Calu3 (cell line): ENCODE measurements at regions of chr16 and their contacts with region 1.

Region 1: DNA sequence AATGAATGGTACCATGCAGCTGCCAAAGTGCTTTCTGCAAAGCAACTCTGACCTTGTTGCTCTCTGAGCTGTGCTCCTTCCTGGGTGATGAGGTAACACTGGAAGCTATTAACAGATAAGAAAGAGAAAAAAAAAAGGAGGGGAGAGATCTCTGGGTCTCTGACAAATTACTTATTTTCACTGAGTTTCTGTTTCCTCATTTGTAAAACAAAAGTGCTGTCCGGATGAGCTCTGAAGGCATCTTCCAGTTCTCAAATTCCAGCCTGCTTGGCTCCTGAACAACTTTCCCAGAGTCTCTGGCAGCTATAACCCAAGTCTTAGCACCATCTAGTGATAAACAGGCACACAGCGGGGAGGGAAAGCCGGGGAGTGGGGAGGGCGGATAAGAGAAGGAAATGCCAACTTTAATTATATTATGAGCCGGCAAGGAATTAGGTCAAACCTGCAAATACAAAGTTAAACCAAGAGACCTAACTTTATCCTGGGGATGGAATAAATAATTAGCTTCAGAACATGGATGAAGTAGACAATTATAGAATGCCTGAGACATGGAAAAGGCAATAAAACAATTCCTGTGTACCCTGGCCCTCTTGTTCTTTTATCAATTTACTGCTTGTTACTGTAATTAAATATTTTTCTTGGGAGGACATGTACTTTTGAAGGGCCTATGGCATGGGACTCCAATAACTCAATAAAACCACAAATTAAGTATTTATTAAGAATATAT is 61.3 kb upstream of the KIFC3 start:
- DNase-seq: peak; percentile 75
- H3K4me3 Mint-ChIP-seq: no peak overlapping the region
- H3K27ac Mint-ChIP-seq: no peak overlapping the region
- H3K4me1 Mint-ChIP-seq: peaks cover 14% of the 10 kb centered on the region
- H3K27me3 Mint-ChIP-seq: no peaks in the 10 kb centered on the region
- CTCF ChIP-seq: peak; percentile 40

Region 2: GRCh38 chr16:57757326-57757786 is 106.2 kb before region 1 on chr16:
- CTCF ChIA-PET with region 1: interaction called, 14 read pairs
- intact Hi-C with region 1: loop called (anchors 1 kb)
- DNase-seq: peak; percentile 98
- H3K4me3 Mint-ChIP-seq: no peak overlapping the region
- H3K27ac Mint-ChIP-seq: no peak overlapping the region
- H3K4me1 Mint-ChIP-seq: no peaks in the 10 kb centered on the region
- H3K27me3 Mint-ChIP-seq: no peaks in the 10 kb centered on the region
- CTCF ChIP-seq: peak; percentile 95

Region 3: GRCh38 chr16:57795431-57795878 is 68.1 kb before region 1 on chr16:
- CTCF ChIA-PET with region 1: interaction called, 38 read pairs
- intact Hi-C with region 1: loop called (anchors 2 kb)
- DNase-seq: peak; percentile 76
- H3K4me3 Mint-ChIP-seq: no peak overlapping the region
- H3K27ac Mint-ChIP-seq: no peak overlapping the region
- H3K4me1 Mint-ChIP-seq: peaks cover 37% of the 10 kb centered on the region
- H3K27me3 Mint-ChIP-seq: no peaks in the 10 kb centered on the region
- CTCF ChIP-seq: peak; percentile 72

Region 4: GRCh38 chr16:57810197-57811031 is 53.2 kb before region 1 on chr16:
- CTCF ChIA-PET with region 1: interaction called, 12 read pairs
- intact Hi-C with region 1: no loop called
- DNase-seq: peak; percentile 94
- H3K4me3 Mint-ChIP-seq: peak overlapping the region; percentile 46
- H3K27ac Mint-ChIP-seq: peak overlapping the region; percentile 71
- H3K4me1 Mint-ChIP-seq: peaks cover 77% of the 10 kb centered on the region
- H3K27me3 Mint-ChIP-seq: no peaks in the 10 kb centered on the region
- CTCF ChIP-seq: no peak

Region 5: GRCh38 chr16:58733671-58734458 is 870.3 kb after region 1 on chr16 and contains the start of gene GOT2:
- CTCF ChIA-PET with region 1: no interaction called
- intact Hi-C with region 1: no loop called
- DNase-seq: peak; percentile 94
- H3K4me3 Mint-ChIP-seq: peak within 1 kb of the TSS; percentile 98
- H3K27ac Mint-ChIP-seq: peak within 1 kb of the TSS; percentile 87
- H3K4me1 Mint-ChIP-seq: peaks cover 16% of the 10 kb centered on the region
- H3K27me3 Mint-ChIP-seq: peaks cover 17% of the 10 kb centered on the region
- CTCF ChIP-seq: peak; percentile 80
- total RNA-seq, gene GOT2: 146 and 162 TPM in 2 replicates